Right cardiac atrium (tissue), 5 donors: ENCODE measurements at regions of chr17 and their contacts with region 1.

Region 1: DNA sequence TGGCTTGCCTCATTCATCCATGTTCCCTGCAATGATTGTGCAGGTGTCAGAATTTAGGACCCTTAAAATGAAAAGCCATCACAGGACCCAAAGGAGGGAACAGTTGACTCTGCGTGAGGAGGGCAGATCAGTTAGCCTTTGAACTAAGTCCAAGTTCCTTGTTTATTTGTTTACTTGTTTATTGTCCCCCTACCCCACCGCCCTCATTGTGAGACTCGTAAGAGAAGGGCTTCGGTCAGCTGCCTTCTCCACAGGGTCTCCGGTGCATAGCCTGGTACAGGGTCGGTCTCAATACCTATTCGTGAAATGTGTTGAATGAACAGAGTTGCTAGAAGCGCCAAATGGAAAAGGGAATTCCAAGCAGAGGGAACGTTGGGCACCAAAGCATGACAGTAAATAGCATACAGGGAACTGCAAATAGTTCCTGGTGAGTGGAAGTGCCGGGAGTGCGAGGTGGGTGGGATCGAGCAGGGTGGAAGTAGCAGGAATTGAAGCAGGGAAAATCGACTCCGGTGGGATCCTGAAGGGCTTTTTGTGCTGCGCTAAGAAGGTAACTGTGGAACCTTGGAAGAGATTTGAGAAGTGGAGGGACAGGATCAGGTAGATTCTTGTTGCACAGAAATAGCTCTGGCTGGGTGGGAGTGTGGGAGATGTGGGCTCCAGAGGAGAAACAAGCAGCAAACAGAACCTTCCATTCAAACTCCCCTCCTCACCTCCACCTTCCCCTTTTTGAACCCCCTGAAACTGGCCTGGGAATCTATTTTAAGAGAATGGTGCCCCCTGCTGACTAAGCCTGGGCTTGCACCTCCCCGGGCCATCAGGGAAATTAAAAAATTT is 12.7 kb downstream of the SLC35B1 start:
- DNase-seq: peak; percentile 39 to 87 (median 68)
- ATAC-seq: no peak
- H3K4me3 ChIP-seq: no peak overlapping the region
- H3K27ac ChIP-seq: no peak overlapping the region
- H3K4me1 ChIP-seq: peaks cover 5% of the 10 kb centered on the region
- H3K27me3 ChIP-seq: no peaks in the 10 kb centered on the region

Region 2: GRCh38 chr17:49117587-49118230 is 577.4 kb before region 1 on chr17:
- intact Hi-C with region 1: no loop called
- DNase-seq: no peak
- ATAC-seq: no peak
- H3K4me3 ChIP-seq: no peak overlapping the region
- H3K27ac ChIP-seq: no peak overlapping the region
- H3K4me1 ChIP-seq: no peaks in the 10 kb centered on the region
- H3K27me3 ChIP-seq: peaks cover 2% of the 10 kb centered on the region

Region 3: GRCh38 chr17:49567871-49568694 is 127.0 kb before region 1 on chr17:
- intact Hi-C with region 1: loop called (anchors 1 to 2 kb)
- DNase-seq: peak; percentile 91 to 96 (median 96)
- ATAC-seq: peak; percentile 76 to 82
- H3K4me3 ChIP-seq: peak overlapping the region; percentile 15
- H3K27ac ChIP-seq: peak overlapping the region; percentile 31
- H3K4me1 ChIP-seq: peaks cover 8% of the 10 kb centered on the region
- H3K27me3 ChIP-seq: no peaks in the 10 kb centered on the region

Region 4: DNA sequence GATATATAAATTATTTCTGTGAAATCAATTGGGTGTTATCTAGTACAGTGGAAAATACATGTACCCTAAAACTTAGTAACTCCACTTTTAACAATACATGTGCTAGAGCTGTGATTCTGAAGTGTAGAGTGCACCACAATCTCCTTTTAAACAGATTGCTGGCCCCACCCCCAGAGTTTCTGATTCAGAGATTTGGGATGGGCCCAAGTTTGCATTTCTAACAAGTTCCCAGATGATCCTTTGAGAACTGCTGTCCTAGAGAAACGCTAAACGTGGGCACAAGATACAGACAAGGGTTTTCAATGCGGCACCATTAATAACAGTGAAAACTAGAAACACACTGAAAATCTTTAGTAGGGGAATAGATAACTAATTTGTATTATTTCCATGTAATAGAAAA is 70.2 kb before region 1 on chr17:
- intact Hi-C with region 1: no loop called
- DNase-seq: no peak
- ATAC-seq: peak; percentile 36 to 63
- H3K4me3 ChIP-seq: no peak overlapping the region
- H3K27ac ChIP-seq: no peak overlapping the region
- H3K4me1 ChIP-seq: peaks cover 3% of the 10 kb centered on the region
- H3K27me3 ChIP-seq: no peaks in the 10 kb centered on the region

Region 5: DNA sequence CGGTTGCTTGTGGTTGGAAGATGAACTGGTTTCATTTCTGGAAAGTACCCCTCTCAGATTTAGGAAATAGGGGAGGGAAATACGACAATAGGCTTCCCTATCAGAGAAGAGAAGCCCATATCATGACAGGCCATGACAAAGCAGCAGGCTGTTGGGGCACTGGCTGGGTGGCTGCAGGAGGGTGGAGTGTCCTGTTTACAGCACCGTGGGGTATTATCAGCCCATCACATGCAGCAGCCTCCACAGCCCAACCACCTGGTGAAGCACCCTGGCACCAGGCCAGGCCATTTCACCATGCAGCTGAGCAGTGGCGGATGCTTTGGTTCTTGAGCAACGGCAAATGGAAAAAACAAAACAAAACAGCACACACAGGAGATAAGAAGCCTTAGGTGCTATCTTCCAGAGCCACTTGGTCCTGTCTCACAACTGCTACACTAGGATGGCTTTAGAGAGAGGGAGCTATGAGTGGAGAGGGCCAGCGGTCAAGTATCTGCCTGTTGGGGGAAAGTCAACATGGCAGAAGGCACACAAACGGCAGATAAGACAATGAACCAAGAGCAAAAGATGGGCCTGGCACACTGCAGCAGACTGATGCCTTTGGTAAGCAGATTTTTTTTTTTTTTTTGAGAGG is 44.7 kb after region 1 on chr17:
- intact Hi-C with region 1: no loop called
- DNase-seq: peak; percentile 86 to 95 (median 93)
- ATAC-seq: peak; percentile 84 to 85
- H3K4me3 ChIP-seq: no peak overlapping the region
- H3K27ac ChIP-seq: peak overlapping the region; percentile 73
- H3K4me1 ChIP-seq: peaks cover 24% of the 10 kb centered on the region
- H3K27me3 ChIP-seq: no peaks in the 10 kb centered on the region